AG04450 (cell line): ENCODE measurements at regions of chr18 and their contacts with region 1.

Region 1: GRCh38 chr18:46173393-46174341 is 69.5 kb downstream of the HAUS1 start:
- DNase-seq: peak; percentile 81
- H3K4me3 ChIP-seq: peak overlapping the region; percentile 72
- H3K27ac ChIP-seq: peak overlapping the region; percentile 85
- H3K27me3 ChIP-seq: no peaks in the 10 kb centered on the region
- CTCF ChIP-seq: peak; percentile 95

Region 2: DNA sequence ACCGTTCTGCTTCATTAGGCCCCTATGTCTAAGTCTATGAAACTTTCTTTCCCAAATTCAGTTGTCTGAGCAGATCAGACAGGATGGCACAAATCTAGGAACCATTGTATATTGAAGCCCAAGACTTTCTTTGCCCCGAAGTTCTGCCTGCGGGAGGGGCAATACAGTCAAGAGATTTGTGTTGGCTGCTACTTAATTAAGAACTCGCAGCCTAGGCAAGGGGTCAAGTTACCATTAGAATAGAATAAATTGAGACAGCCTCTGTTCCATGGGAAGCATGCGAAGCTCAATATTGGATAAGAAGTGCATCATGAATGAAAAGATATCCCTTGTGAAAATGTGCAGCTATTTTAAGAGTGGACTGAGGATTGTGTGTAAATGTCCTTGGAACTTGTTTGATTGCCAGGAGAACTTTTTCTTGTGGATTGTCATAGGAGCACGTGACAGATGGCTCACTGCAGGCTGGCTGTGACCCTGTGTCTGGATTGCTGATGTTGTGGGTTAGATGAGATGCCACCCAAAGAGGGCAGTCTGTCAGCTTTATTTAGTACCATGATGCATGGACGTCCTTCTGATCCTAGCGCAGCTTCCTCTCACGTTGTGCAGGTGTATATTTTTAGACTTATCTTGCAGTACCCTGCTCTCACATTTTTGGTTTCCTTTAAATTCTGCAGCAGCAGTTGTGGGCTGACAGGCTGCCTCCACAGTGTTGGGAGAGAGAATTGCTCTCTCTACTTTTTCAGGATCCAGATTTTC is 38.6 kb before region 1 on chr18:
- CTCF ChIA-PET with region 1: interaction called, 145 read pairs
- POLR2A ChIA-PET with region 1: no interaction called
- DNase-seq: no peak
- H3K4me3 ChIP-seq: no peak overlapping the region
- H3K27ac ChIP-seq: no peak overlapping the region
- H3K27me3 ChIP-seq: no peaks in the 10 kb centered on the region
- CTCF ChIP-seq: no peak

Region 3: GRCh38 chr18:46161703-46162396 is 11.8 kb before region 1 on chr18:
- CTCF ChIA-PET with region 1: interaction called, 65 read pairs
- POLR2A ChIA-PET with region 1: interaction called, 3 read pairs
- DNase-seq: no peak
- H3K4me3 ChIP-seq: no peak overlapping the region
- H3K27ac ChIP-seq: no peak overlapping the region
- H3K27me3 ChIP-seq: no peaks in the 10 kb centered on the region
- CTCF ChIP-seq: no peak

Region 4: DNA sequence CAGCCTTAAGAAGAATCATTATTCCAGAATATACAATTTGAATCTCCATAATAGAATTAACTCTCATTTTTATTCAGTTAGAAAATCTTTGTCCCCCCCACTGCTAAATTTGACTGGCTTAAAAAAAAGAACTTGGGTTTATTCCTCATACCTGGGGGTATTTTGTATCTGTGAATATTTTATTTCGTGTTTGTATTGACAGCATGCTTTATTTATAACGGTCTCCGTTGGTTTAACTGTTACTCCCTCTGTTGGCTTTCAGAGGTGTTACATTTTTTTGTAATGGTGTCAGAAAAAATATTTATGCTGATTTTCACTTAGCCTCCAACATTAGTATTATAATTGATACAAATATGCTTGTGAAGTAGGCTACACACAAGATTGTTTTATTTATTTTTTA is 39.6 kb after region 1 on chr18:
- CTCF ChIA-PET with region 1: interaction called, 29 read pairs
- POLR2A ChIA-PET with region 1: interaction called, 6 read pairs
- DNase-seq: no peak
- H3K4me3 ChIP-seq: no peak overlapping the region
- H3K27ac ChIP-seq: no peak overlapping the region
- H3K27me3 ChIP-seq: no peaks in the 10 kb centered on the region
- CTCF ChIP-seq: peak; percentile 38

Region 5: DNA sequence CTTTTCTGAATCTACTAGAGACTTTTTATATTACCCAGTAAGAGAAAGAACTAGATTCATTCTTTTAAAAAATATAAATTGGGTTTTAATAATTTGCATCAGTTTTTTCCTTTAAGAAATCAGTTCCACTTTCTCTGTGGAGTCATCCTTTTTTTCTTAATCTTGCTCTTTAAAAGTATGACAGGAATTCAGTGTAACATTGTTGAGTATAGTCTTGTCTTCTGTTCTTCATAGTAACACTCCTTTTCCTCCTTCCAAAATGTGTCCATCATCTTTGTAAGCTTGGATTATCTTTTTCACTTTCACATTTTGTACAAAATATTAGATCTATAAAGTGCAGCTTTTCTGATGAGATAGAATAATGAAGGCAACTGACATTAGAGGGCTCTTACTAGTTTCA is 65.9 kb after region 1 on chr18:
- CTCF ChIA-PET with region 1: interaction called, 37 read pairs
- POLR2A ChIA-PET with region 1: interaction called, 4 read pairs
- DNase-seq: no peak
- H3K4me3 ChIP-seq: no peak overlapping the region
- H3K27ac ChIP-seq: no peak overlapping the region
- H3K27me3 ChIP-seq: no peaks in the 10 kb centered on the region
- CTCF ChIP-seq: no peak

Region 6: GRCh38 chr18:46273829-46274228 is 100.2 kb after region 1 on chr18:
- CTCF ChIA-PET with region 1: interaction called, 97 read pairs
- POLR2A ChIA-PET with region 1: no interaction called
- DNase-seq: no peak
- H3K4me3 ChIP-seq: no peak overlapping the region
- H3K27ac ChIP-seq: no peak overlapping the region
- H3K27me3 ChIP-seq: no peaks in the 10 kb centered on the region
- CTCF ChIP-seq: no peak

Region 7: DNA sequence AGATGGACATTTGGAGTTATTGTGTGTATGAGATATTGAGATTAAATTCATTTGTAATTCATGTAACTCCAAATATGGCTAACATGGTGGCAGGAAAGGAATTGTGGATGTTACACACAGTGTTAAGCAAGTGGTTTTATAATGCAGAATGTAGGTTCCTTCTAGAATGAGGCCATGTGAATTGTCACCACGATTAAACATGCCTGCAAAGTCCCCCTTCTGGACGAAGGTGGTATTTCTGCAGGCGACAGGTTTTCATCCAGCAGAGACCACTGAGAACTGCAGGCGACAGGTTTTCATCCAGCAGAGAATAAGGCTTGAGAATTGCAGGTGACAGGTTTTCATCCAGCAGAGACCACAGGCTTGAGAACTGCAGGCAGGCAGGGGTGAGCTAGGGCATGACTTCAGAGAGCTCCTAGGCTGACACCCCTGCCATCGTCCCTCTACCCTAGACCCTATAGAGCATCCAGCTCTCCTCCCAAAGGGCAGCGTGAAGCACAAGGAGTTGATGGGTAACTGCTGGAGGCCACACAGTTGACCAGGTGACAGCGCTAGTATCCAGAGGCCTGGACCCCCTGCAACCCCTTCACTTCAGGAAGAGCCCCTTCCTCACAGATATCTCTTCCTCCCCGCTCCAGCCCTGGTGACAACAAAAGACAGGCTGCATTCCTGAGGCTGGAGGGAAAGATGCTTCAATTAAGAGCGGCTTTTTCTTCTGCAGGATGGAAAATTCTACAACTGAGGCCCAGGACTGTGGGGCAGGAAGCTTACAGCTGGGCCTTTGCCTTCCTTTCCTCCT is 307.6 kb after region 1 on chr18:
- CTCF ChIA-PET with region 1: interaction called, 14 read pairs
- POLR2A ChIA-PET with region 1: no interaction called
- DNase-seq: peak; percentile 18
- H3K4me3 ChIP-seq: no peak overlapping the region
- H3K27ac ChIP-seq: no peak overlapping the region
- H3K27me3 ChIP-seq: no peaks in the 10 kb centered on the region
- CTCF ChIP-seq: peak; percentile 72